ENCODE measurements at regions of chr1 and their contacts with region 1.

Region 1: DNA sequence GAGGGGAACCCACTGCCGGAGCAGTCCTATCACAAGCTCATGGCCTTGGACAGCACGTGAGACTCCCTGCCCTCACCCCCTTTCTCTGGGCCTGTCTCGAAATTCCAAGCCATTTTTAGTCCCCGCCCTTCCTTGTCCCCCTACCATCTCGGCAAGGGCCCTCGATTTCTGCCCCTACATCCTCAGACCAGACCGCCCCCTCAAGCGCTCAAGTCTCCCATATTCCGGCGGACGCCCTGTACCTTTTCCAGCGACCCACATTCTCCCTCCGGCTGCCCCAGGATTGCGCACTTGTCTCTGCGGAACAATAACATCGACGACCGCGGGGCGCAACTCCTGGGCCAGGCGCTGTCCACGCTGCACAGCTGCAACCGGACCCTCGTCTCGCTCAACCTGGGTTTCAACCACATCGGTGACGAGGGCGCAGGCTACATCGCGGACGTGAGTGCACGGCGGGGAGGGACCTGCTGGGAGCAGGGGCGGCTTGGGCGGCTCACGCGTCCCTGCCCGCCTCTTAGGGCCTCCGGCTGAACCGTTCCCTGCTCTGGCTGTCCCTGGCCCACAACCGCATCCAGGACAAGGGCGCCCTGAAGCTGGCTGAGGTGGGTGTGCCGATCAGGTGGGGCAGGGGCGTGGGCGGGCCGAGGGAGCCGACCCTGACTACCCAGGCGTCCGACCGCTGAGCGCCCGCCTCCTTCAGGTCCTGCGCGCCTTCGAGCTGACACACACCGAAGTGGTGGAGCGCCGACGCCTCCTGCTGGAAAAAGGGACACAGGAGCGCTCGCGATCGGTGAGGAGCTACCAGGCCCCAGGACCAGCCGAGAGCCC is 7.0 kb downstream of the LRRC71 start:
- DNase-seq: peak; percentile 89
- H3K4me3 Mint-ChIP-seq: peak overlapping the region; percentile 11
- H3K27ac Mint-ChIP-seq: no peak overlapping the region
- H3K4me1 Mint-ChIP-seq: peaks cover 7% of the 10 kb centered on the region
- H3K27me3 Mint-ChIP-seq: peaks cover 96% of the 10 kb centered on the region
- CTCF ChIP-seq: peak; percentile 89

Region 2: DNA sequence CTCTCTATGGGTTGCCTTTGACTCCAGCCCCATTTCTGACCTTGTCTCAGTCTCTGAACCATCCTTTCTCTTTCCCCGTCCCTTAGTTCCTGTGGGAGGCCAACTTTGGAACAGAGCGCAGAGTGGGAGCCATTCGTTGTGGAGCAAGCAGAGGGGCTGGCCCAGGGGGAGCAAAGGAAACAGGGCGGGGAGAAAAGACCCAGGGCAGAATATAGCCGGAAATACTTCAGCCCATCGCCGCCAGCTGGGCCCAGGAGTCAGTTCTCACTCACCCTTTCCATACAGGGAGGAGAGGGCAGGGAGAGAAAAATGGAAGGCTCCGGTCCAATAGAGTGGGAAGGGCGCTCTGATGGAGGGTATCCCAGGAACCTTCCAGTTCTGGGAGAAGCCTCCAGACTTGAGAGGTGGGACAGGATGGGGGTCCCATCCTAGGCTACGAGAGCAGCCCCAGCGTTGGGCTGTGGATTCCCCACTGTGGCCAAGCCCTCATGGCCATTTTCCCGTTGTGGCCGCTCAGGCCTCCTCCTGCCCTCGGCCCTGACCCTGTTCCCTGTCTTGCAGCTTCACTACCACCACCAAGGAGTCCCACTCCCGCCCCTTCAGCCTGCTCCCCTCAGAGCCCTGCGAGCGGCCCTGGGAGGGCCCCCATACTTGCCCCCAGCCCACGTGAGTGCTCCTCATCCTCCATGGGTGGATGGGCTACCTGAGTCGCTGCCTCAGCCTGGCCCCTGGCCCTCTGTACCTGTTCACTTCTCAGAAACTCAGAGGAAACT is 23.1 kb before region 1 on chr1:
- CTCF ChIA-PET with region 1: interaction called, 12 read pairs
- intact Hi-C with region 1: no loop called
- DNase-seq: no peak
- H3K4me3 Mint-ChIP-seq: no peak overlapping the region
- H3K27ac Mint-ChIP-seq: no peak overlapping the region
- H3K4me1 Mint-ChIP-seq: peaks cover 10% of the 10 kb centered on the region
- H3K27me3 Mint-ChIP-seq: peaks cover 77% of the 10 kb centered on the region
- CTCF ChIP-seq: no peak

Measured in Calu3 (cell line).